Activated T-helper 1 cell treated with anti-CD3 and anti-CD28 coated beads, Interleukin-12 subunit alpha, Interleukin-12 subunit beta, Interleukin-2, Interleukin-4 antibody, amounts not matched to agents 30 ng/mL and 10 ng/mL and 1 ng/mL, durations not matched to agents 14 hours and 24 hours and 36 hours (primary cell): ENCODE measurements at regions of chr18 and their contacts with region 1.

Region 1: DNA sequence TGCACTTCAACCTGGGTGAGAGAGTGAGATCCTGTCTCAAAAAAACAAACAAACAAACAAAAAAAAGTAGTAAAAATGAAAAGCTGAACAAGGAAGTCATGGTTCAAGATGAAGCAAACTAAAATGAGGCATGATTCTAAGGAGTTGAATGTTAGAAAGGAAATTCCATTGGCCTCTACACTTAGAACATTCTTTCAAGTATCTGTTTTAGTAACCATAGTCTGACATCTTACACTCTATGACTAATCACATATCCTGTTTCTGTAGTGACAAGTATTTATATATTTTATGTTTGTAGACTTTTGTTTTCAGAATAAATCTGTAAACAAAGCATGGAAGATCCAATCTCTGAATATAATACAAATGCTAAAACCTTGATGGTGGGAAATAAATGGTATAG is 164.1 kb downstream of the KIAA1328 start:
- DNase-seq: no peak
- H3K4me3 Mint-ChIP-seq: no peak overlapping the region
- H3K27ac Mint-ChIP-seq: peak overlapping the region; percentile 22
- H3K4me1 Mint-ChIP-seq: peaks cover 9% of the 10 kb centered on the region
- H3K27me3 Mint-ChIP-seq: no peaks in the 10 kb centered on the region

Region 2: DNA sequence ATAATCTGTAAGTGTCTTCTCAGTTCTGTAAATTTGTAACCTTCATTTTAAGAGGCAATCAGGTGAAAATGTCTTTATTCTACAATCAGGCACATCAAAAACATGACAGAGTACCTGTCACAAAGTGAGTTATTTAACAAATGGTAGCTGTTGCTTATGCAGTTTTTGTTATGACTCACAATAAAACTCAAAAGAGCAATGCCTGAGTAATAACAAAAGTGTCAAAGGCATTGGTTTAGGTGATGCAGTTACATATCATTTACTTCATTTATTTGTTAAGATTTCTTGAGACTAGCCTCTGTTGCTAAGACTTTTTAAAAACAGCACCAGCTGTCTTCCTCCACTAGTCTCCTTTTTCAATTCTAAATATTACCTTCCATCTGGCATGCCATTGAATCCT is 13.7 kb after region 1 on chr18:
- intact Hi-C with region 1: loop called (anchors 2 kb)
- DNase-seq: no peak
- H3K4me3 Mint-ChIP-seq: no peak overlapping the region
- H3K27ac Mint-ChIP-seq: no peak overlapping the region
- H3K4me1 Mint-ChIP-seq: peaks cover 10% of the 10 kb centered on the region
- H3K27me3 Mint-ChIP-seq: no peaks in the 10 kb centered on the region